Head of caudate nucleus (tissue), 42 donors: ENCODE measurements at regions of chr2 and their contacts with region 1.

Region 1: DNA sequence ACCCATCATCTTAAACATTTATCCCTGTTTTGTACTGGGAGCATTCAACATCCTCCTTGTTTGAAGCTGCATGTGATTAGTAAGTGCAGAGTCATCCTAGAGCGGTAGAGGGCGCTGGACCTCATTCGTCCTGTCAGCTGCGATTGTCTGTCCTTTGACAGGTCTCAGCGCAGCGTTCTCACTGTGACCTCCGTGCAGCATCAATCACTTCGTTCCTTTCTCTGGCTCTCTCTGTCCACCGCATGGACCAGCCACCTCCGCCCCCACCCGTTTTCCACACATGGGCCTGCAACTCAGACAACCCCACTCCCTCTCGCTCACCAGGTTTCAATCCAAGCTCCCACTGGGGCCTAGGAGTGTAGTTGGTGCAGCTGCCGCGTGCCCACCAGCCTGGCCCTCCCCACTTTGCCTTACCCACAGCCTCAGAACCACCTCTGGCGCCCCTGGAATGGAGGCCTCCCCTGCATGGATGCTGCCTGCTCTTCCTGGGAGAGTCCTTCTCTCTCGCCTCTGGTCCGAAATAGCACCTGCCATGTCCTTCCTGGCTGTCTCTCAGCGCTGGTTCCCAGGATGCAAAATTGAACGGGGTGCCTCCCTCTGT is 90.5 kb downstream of the NDUFA10 start:
- DNase-seq: peak; percentile 48 to 95 (median 86)

Region 2: DNA sequence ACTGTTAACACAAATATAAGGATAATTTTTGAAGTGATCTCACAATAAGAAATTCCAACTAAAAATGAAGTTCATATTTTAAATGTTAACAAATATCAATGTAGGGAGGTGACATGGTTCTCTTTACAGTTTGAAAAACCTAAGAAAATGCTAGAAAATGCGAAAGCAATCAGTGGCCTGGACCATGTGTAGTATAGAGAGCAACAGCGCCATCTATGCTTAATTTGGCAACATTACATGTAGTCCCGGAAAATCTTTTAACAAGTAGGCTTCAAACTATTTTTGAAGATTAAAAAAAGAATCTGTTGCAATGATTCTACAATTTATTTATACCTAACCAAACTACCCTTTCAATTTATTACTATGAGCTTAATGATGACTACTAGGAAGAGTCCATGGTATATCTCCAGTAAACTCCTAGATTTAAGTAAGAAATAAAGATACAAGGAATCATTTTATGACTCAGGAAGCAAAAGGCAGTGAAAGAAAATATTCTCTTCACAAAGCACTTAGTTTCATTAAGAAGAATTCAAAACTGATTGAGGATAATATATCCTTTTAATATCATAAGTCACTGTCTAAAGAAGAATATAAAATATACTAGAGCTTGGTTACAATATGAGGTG is 57.1 kb after region 1 on chr2:
- intact Hi-C with region 1: loop called (anchors 5 kb)
- DNase-seq: peak in 14 of 42 donors; percentile 32 to 78 (median 44)